Activated T-helper 2 cell treated with anti-CD3 and anti-CD28 coated beads, Interferon-gamma antibody, Interleukin-2, Interleukin-4, amounts not matched to agents 10 μg/mL and 5 μg/mL and 100 μg/mL, durations not matched to agents 14 hours and 24 hours and 36 hours (primary cell): ENCODE measurements at regions of chr17 and their contacts with region 1.

Region 1: DNA sequence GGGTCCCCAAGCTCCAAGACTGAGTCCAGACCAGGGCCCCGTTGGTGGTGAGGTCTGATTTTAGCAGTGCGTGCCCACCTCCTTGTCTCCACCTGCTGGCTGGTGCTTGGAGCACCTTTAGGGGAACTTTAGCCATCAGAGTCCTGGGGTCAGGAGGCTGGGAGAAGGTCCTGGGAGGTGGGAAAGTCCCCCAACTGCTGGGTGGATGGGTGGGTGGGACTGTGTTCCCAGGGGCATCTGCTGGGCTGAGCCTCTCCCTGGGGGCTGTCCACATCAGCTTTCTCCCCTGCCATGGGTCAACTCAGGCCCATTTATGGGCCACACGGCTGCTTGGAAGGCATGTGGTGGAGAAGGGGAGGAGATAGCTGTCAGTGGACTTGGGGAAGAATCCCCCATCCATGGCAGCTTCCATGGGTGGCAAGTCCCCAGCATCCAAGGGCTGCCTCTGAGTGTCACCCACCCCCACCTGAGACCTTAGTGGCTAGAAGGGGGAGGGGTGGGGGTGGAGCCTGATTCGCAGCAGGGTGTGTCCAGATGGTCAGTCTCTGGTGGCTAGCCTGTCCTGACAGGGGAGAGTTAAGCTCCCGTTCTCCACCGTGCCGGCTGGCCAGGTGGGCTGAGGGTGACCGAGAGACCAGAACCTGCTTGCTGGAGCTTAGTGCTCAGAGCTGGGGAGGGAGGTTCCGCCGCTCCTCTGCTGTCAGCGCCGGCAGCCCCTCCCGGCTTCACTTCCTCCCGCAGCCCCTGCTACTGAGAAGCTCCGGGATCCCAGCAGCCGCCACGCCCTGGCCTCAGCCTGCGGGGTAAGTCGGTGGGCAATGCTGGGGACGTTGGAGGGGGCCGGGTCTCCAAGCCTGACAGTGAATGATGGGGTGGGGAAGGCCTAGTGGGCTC is at the start of gene TRPV2:
- DNase-seq: peak; percentile 30
- H3K4me3 Mint-ChIP-seq: peak within 1 kb of the TSS; percentile 96
- H3K27ac Mint-ChIP-seq: peak within 1 kb of the TSS; percentile 96
- H3K4me1 Mint-ChIP-seq: peaks cover 37% of the 10 kb centered on the region
- H3K27me3 Mint-ChIP-seq: no peaks in the 10 kb centered on the region
- total RNA-seq, gene TRPV2: 44.4 and 46.8 TPM in 2 replicates

Region 2: DNA sequence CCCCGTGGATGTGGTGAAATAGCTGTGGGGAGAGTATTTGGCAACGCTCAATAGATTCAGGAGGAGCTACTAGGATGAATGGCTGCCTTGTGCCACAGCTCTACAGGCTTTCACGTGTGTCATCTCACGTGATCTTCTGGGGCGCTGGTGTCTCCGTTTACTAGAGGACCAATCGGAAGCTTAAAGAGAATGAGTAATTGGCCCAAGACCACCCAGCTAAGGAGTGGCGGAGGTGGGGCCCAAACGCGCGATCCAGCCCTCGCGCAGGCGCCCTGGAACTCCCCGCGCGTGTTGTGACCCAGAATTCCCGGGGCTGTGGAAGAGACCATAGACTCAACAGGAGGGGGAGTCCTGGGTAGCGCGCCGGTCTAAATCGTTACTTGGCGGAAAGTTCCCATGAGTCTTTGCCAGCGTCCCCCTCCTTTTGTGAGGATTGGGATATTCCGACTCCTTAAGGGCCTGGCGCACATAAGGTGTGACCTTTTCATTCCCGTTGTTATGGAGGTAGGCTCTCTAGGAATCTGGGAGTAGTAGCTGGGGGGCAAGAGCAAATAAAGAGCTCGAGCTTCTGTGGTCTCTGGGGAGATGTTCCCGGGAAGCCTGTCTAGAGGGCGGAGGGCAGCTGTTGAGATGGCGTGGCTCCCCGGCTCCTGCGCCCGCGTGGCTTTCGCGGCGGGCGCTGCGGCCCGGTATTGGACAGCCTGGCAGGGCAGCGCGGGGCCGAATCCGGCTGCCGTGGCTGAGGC is 23.5 kb after region 1 on chr17:
- intact Hi-C with region 1: loop called (anchors 1 kb)
- DNase-seq: peak; percentile 95
- H3K4me3 Mint-ChIP-seq: peak overlapping the region; percentile 98
- H3K27ac Mint-ChIP-seq: peak overlapping the region; percentile 94
- H3K4me1 Mint-ChIP-seq: peaks cover 27% of the 10 kb centered on the region
- H3K27me3 Mint-ChIP-seq: no peaks in the 10 kb centered on the region

Region 3: GRCh38 chr17:16506188-16506587 is 90.9 kb after region 1 on chr17:
- intact Hi-C with region 1: no loop called
- DNase-seq: no peak
- H3K4me3 Mint-ChIP-seq: no peak overlapping the region
- H3K27ac Mint-ChIP-seq: no peak overlapping the region
- H3K4me1 Mint-ChIP-seq: no peaks in the 10 kb centered on the region
- H3K27me3 Mint-ChIP-seq: peaks cover 10% of the 10 kb centered on the region